ENCODE measurements at regions of chr6 and their contacts with region 1.

Region 1: DNA sequence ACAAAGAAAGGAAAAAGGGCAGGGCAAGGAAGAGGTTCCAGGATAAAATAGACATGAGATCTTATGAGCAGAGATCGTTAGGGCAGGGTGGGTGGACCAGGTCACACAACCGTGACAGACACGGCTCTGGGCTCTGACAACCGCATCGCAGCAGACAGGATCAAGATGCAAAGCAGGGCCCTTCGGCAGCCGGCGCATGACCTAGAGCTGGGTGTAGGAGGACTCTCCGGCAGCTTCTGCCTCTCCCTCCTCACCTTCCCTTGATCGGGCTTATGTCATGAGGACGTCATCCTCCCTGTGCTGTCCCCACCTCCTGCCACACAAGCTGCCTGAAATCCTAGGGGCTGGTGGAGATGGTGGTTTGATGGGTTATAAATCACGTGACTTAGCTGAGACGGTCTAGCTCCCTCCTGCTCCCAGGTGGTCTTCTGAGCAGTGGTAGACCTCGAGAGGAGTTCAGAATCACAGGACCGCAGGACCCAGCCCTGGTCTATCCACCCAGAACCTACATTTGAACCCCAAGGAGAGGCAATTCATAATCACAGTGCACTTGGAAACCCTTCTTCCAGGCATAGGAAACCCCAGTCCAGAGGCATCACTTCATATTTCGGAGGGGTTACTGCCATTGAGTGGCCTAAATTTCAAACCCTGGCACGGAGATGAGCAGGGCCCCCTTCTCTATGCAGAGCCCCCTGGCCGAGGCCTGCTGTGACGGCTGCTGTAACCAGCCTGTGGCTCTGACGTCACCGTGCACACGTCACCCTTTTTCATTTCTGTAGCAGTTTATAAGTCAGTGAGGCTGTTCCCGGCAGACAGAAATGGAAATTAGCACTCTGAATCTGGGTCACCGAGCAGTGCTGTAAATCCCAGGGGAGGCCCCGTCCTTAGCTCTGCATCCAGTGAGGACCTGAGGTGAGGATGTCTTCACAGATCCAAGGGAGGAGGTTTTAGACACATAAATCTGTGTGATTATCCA is 8.7 kb upstream of the CCR6 start:
- DNase-seq: peak; percentile 93
- ATAC-seq: peak; percentile 90
- H3K4me3 ChIP-seq: peak overlapping the region; percentile 30; the same call in 1 of the 2 replicates
- H3K27ac ChIP-seq: peak overlapping the region; percentile 94
- H3K4me1 ChIP-seq: peaks cover 54% of the 10 kb centered on the region
- H3K27me3 ChIP-seq: no peaks in the 10 kb centered on the region
- CTCF ChIP-seq: no peak
- EP300 ChIP-seq: peak; percentile 83 to 91
- POLR2A ChIP-seq: peak; percentile 65
- RAD21 ChIP-seq: 0 out of 2 replicates have a peak, but pooled peaks have one; percentile 1

Region 2: GRCh38 chr6:166956444-166957086 is 157.7 kb before region 1 on chr6 and contains the start of gene RNASET2:
- CTCF ChIA-PET with region 1: interaction called, 5 read pairs
- POLR2A ChIA-PET with region 1: interaction called, 3 read pairs
- RAD21 ChIA-PET with region 1: interaction called, 13 read pairs
- SMC1A ChIA-PET with region 1: interaction called, 8 read pairs
- in situ Hi-C with region 1: no loop called
- intact Hi-C with region 1: no loop called
- DNase-seq: no peak
- ATAC-seq: peak; percentile 83
- H3K4me3 ChIP-seq: peak within 1 kb of the TSS; percentile 94
- H3K27ac ChIP-seq: peak within 1 kb of the TSS; percentile 94
- H3K4me1 ChIP-seq: peaks cover 49% of the 10 kb centered on the region
- H3K27me3 ChIP-seq: no peaks in the 10 kb centered on the region
- CTCF ChIP-seq: no peak
- EP300 ChIP-seq: no peak
- POLR2A ChIP-seq: peak; percentile 91
- RAD21 ChIP-seq: no peak
- polyA plus RNA-seq, gene RNASET2: 5.5 to 17.8 TPM

Region 3: GRCh38 chr6:167056370-167056769 is 57.9 kb before region 1 on chr6:
- CTCF ChIA-PET with region 1: interaction called, 3 read pairs
- POLR2A ChIA-PET with region 1: interaction called, 5 read pairs
- RAD21 ChIA-PET with region 1: interaction called, 16 read pairs
- SMC1A ChIA-PET with region 1: interaction called, 6 read pairs
- in situ Hi-C with region 1: no loop called
- intact Hi-C with region 1: no loop called
- DNase-seq: peak; percentile 76
- ATAC-seq: peak; percentile 99
- H3K4me3 ChIP-seq: no peak overlapping the region
- H3K27ac ChIP-seq: no peak overlapping the region
- H3K4me1 ChIP-seq: peaks cover 9% of the 10 kb centered on the region; the same call in 1 of the 2 replicates
- H3K27me3 ChIP-seq: no peaks in the 10 kb centered on the region
- CTCF ChIP-seq: no peak
- EP300 ChIP-seq: peak in 1 of 2 experiments; percentile 75; a peak in 2 of 4 replicates
- POLR2A ChIP-seq: no peak
- RAD21 ChIP-seq: no peak

Region 4: DNA sequence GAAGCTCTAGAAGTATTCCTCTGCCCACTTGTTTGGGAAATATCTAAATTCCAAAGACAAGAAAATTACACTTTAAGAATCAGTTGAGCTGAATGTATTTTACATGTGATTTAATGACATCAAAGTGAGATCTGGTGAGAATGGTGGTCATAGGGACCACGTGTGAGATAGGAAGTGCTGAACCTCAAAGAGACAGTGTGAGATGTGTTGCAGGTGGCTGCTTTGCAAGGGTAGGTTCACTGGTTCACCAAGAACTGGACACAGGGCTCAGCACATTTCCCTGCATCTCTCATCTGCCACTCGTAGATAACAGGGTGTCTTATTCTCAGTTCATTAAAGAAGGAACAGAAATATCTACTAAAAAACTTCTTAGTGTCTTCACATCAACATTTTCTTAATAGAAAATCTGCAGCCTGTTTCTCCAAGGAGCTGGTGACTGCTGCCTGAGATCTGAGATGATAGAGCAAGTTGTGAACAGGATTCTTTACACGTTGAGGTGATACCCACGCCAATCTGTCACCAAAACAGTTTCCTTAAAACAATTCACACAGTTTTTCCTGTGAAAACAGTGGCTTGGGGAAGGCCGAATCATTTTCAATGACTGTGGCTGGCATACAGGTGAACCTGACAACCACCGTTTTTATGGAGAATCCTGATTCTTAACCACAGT is 15.9 kb after region 1 on chr6:
- CTCF ChIA-PET with region 1: interaction called, 52 read pairs
- POLR2A ChIA-PET with region 1: interaction called, 54 read pairs
- RAD21 ChIA-PET with region 1: interaction called, 120 read pairs
- SMC1A ChIA-PET with region 1: interaction called, 351 read pairs
- in situ Hi-C with region 1: no loop called
- intact Hi-C with region 1: no loop called
- DNase-seq: no peak
- ATAC-seq: peak; percentile 71
- H3K4me3 ChIP-seq: peak overlapping the region; percentile 1; the same call in 1 of the 2 replicates
- H3K27ac ChIP-seq: peak overlapping the region; percentile 47
- H3K4me1 ChIP-seq: peaks cover 21% of the 10 kb centered on the region
- H3K27me3 ChIP-seq: no peaks in the 10 kb centered on the region
- CTCF ChIP-seq: no peak
- EP300 ChIP-seq: no peak
- POLR2A ChIP-seq: no peak
- RAD21 ChIP-seq: no peak

Region 5: GRCh38 chr6:167255918-167256553 is 141.8 kb after region 1 on chr6:
- CTCF ChIA-PET with region 1: no interaction called
- POLR2A ChIA-PET with region 1: no interaction called
- RAD21 ChIA-PET with region 1: no interaction called
- SMC1A ChIA-PET with region 1: no interaction called
- in situ Hi-C with region 1: no loop called
- intact Hi-C with region 1: no loop called
- DNase-seq: no peak
- ATAC-seq: no peak
- H3K4me3 ChIP-seq: no peak overlapping the region
- H3K27ac ChIP-seq: no peak overlapping the region
- H3K4me1 ChIP-seq: no peaks in the 10 kb centered on the region
- H3K27me3 ChIP-seq: no peaks in the 10 kb centered on the region; a peak in 1 of 4 replicates
- CTCF ChIP-seq: 0 out of 6 replicates have a peak, but pooled peaks of 1 of the 3 experiments have one; percentile 20
- EP300 ChIP-seq: no peak
- POLR2A ChIP-seq: no peak
- RAD21 ChIP-seq: no peak

Measured in GM12878 (cell line).